HEK293T (cell line): ENCODE measurements at regions of chr4 and their contacts with region 1.

Region 1: GRCh38 chr4:17447675-17448298 is 64.1 kb downstream of the QDPR start:
- DNase-seq: peak; percentile 63

Region 2: DNA sequence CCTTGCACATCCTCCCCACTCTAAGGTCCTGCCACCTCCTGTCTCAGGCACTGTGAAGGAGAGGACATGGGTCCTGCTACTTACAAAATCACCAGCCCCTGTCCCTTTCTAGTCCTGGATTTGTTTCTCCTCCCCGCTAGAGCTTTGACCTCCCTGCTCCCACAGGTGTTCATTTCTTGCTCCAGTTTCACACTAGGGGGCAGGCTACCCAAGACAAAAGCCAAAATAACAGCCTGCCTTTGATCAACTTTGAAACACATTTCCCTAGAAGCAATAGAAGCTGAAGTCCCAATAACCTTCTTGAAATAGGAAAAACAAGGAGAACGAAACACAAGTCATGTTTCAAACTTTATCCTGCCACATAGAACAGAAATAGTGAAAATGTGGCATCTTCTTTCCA is 100.3 kb before region 1 on chr4:
- CTCF ChIA-PET with region 1: interaction called, 23 read pairs
- POLR2A ChIA-PET with region 1: no interaction called
- DNase-seq: peak; percentile 47

Region 3: GRCh38 chr4:17400686-17401085 is 47.1 kb before region 1 on chr4:
- CTCF ChIA-PET with region 1: no interaction called
- POLR2A ChIA-PET with region 1: no interaction called
- DNase-seq: no peak